ENCODE measurements at regions of chr5 and their contacts with region 1.

Region 1: DNA sequence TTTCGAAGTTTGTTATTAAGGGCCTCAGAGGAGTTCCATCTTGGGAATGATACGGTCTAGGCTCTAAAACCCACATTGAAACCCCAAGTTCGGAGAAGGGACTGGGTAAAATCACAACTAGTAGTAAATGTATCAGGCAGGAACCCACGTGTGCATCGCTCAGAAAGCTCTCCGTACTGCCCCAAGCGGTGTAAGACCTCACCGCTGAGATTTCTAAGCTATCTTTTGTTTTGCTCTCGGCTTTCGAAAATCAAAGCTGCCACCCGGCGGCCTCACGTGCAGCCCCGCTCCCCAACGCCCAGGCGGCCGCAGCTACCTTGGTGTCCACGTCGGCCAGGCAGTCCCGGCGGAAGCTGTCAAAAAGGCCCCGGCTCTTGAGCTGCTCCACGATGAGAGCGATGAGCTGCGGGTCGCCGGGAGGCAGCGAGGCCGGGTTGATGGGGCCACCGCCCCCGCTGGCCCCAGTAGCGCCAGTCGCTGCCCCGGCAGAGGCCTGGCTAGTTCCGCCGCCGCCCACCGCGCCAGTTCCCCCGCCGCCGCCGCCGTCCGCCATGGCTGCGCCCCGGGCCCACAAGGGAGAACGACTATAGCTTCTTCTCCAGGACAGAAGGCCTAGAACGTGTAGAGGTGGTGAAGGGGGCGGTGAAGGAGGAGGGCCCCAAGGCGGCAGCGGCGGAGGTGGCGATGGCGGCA is 420 bp downstream of the BOD1 start:
- DNase-seq: peak; percentile 65
- H3K4me3 Mint-ChIP-seq: peak overlapping the region; percentile 96
- H3K27ac Mint-ChIP-seq: peak overlapping the region; percentile 88
- H3K4me1 Mint-ChIP-seq: peaks cover 37% of the 10 kb centered on the region
- H3K27me3 Mint-ChIP-seq: no peaks in the 10 kb centered on the region

Region 2: DNA sequence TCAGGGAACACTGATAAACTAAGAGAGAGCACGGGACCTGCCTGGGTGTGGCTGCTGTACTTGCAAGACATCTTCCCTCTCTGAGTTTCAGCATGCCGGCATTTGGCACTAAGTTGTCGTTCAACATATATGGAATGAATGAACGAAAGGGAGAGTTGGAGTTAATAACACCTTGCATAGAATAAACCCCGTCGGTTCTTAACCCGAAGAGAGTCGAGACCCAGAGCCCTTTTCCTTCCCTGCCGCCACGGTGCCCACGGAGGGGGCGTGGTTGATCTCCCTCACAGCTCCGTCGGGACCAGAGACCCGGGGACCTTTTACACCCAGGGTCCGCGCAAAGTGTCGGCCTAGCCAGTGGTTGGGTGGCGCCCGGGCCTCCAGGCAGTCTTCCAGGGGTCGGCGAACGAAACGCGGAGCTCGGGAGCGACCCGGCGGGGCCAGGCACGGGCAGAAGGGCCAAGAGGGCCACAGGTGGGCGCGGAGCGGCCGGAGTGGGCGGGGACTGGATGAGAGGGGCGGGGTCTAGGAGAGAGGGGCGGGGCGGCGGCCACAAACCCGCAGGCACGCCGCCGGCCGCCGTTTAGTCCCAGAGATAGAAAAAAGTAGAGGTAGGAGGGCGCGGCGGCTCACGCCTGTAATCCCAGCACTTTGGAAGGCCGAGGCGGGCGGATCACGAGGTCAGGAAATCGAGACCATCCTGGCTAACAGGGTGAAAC is 657.5 kb before region 1 on chr5:
- intact Hi-C with region 1: loop called (anchors 1 kb)
- DNase-seq: peak; percentile 51
- H3K4me3 Mint-ChIP-seq: peak overlapping the region; percentile 99
- H3K27ac Mint-ChIP-seq: peak overlapping the region; percentile 98
- H3K4me1 Mint-ChIP-seq: peaks cover 27% of the 10 kb centered on the region
- H3K27me3 Mint-ChIP-seq: peaks cover 6% of the 10 kb centered on the region

Region 3: DNA sequence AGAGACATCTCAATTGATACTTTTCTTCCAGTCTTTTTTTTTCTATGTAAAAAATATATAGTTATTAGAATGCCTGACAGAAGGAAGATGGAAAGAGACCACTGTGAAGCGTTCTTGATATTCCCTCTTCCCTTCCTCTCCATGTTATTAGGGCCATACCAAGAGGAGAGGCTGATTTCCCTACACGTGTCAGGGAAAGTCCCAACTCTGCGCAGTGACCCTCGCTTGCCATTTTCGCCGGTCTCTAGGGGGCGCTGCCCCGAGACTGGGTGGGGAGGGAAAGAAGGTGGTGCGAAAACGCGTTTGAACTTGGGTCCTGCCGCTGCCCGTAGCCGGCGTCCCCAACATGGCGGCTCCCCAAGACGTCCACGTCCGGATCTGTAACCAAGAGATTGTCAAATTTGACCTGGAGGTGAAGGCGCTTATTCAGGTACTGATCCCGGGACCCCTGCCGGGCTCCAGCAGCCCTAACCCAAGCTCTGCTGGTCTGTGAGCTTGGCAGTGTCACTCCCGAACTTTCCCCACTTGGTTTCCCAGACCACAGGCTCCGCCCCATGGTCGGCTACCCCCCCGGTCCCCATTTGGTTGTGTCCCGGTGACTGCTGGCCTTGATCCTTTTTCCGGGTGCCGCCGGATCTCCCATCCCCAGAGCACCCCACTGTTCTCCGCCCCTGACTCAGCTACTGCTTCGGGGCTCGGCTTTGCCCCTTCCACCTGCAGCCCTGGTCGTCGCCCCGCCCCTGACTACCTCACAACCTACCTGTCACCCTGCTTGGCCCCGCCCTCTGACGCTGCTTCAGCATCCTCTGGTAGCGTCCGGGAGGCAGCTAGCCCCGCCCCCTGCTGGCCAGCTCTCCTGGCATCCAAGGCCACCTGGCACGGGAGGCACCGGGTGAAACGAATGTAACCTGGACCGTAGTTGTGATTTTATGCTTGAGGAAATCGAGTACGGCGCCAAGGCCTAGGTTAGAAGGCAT is 471.5 kb before region 1 on chr5 and contains the start of gene BNIP1:
- intact Hi-C with region 1: loop called (anchors 1 kb)
- DNase-seq: peak; percentile 91
- H3K4me3 Mint-ChIP-seq: peak within 1 kb of the TSS; percentile 96
- H3K27ac Mint-ChIP-seq: peak within 1 kb of the TSS; percentile 97
- H3K4me1 Mint-ChIP-seq: peaks cover 9% of the 10 kb centered on the region
- H3K27me3 Mint-ChIP-seq: no peaks in the 10 kb centered on the region
- total RNA-seq, gene BNIP1: 22.6 and 25.3 TPM in 2 replicates

Region 4: GRCh38 chr5:173602423-173602822 is 13.6 kb before region 1 on chr5:
- intact Hi-C with region 1: no loop called
- DNase-seq: no peak
- H3K4me3 Mint-ChIP-seq: no peak overlapping the region
- H3K27ac Mint-ChIP-seq: no peak overlapping the region
- H3K4me1 Mint-ChIP-seq: no peaks in the 10 kb centered on the region
- H3K27me3 Mint-ChIP-seq: no peaks in the 10 kb centered on the region

Region 5: GRCh38 chr5:173707392-173707791 is 91.4 kb after region 1 on chr5:
- intact Hi-C with region 1: no loop called
- DNase-seq: no peak
- H3K4me3 Mint-ChIP-seq: no peak overlapping the region
- H3K27ac Mint-ChIP-seq: no peak overlapping the region
- H3K4me1 Mint-ChIP-seq: no peaks in the 10 kb centered on the region
- H3K27me3 Mint-ChIP-seq: no peaks in the 10 kb centered on the region

Region 6: GRCh38 chr5:173917788-173918786 is 302.1 kb after region 1 on chr5:
- intact Hi-C with region 1: loop called (anchors 1 kb)
- DNase-seq: peak; percentile 44
- H3K4me3 Mint-ChIP-seq: no peak overlapping the region
- H3K27ac Mint-ChIP-seq: no peak overlapping the region
- H3K4me1 Mint-ChIP-seq: no peaks in the 10 kb centered on the region
- H3K27me3 Mint-ChIP-seq: no peaks in the 10 kb centered on the region

Region 7: GRCh38 chr5:173972925-173973615 is 357.0 kb after region 1 on chr5:
- intact Hi-C with region 1: loop called (anchors 1 kb)
- DNase-seq: peak; percentile 53
- H3K4me3 Mint-ChIP-seq: peak overlapping the region; percentile 81
- H3K27ac Mint-ChIP-seq: peak overlapping the region; percentile 18
- H3K4me1 Mint-ChIP-seq: peaks cover 12% of the 10 kb centered on the region
- H3K27me3 Mint-ChIP-seq: peaks cover 32% of the 10 kb centered on the region

Region 8: DNA sequence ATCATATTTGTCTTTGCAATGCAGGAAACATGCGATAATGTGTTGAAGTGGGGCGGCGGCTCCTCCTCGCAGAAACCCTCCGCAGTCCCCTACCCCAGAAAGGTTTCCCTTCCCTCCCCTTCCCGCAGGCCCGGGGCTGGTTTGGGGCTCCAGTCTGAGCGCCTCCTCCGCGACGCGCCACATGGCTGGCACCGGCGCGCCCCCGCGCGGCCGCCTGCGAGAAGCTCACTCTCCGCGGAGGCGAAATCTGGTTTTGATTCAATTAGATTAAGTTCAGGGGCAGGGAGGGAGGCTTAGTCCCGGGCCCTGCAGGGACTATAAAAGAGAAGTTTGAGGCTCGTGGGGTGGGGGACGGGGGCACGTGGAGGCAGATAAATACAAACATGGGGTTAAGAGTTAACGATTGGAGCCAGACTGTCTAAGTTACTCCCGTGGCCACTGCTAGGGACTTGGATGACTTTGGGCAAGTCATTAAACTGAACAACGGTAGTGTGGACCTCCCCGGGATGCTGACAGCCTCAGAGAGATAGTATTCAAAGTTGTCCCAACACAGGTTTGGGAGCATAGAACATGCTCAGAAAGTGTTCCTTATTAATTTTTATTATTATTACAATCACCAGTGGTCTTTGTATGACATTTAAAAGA is 1177.8 kb after region 1 on chr5:
- intact Hi-C with region 1: loop called (anchors 5 kb)
- DNase-seq: peak; percentile 26
- H3K4me3 Mint-ChIP-seq: no peak overlapping the region
- H3K27ac Mint-ChIP-seq: no peak overlapping the region
- H3K4me1 Mint-ChIP-seq: peaks cover 8% of the 10 kb centered on the region
- H3K27me3 Mint-ChIP-seq: peaks cover 4% of the 10 kb centered on the region

Measured in activated T-helper 1 cell treated with anti-CD3 and anti-CD28 coated beads, Interleukin-12 subunit alpha, Interleukin-12 subunit beta, Interleukin-2, Interleukin-4 antibody, amounts not matched to agents 30 ng/mL and 10 ng/mL and 1 ng/mL, durations not matched to agents 14 hours and 24 hours and 36 hours (primary cell).